Activated naive CD4-positive, alpha-beta T cell treated with anti-CD3 and anti-CD28 coated beads for 36 hours (primary cell): ENCODE measurements at regions of chr4 and their contacts with region 1.

Region 1: GRCh38 chr4:123396307-123397143 is at the start of gene SPRY1:
- DNase-seq: peak; percentile 88
- H3K4me3 Mint-ChIP-seq: peak within 1 kb of the TSS; percentile 87
- H3K27ac Mint-ChIP-seq: peak within 1 kb of the TSS; percentile 83
- H3K4me1 Mint-ChIP-seq: peaks cover 18% of the 10 kb centered on the region
- H3K27me3 Mint-ChIP-seq: peaks cover 15% of the 10 kb centered on the region
- total RNA-seq, gene SPRY1: 16.9 to 20.3 TPM

Region 2: GRCh38 chr4:122764821-122765215 is 631.7 kb before region 1 on chr4:
- CTCF ChIA-PET with region 1: no interaction called
- intact Hi-C with region 1: loop called (anchors 2 kb)
- DNase-seq: no peak
- H3K4me3 Mint-ChIP-seq: no peak overlapping the region
- H3K27ac Mint-ChIP-seq: peak overlapping the region; percentile 50
- H3K4me1 Mint-ChIP-seq: peaks cover 30% of the 10 kb centered on the region
- H3K27me3 Mint-ChIP-seq: no peaks in the 10 kb centered on the region

Region 3: DNA sequence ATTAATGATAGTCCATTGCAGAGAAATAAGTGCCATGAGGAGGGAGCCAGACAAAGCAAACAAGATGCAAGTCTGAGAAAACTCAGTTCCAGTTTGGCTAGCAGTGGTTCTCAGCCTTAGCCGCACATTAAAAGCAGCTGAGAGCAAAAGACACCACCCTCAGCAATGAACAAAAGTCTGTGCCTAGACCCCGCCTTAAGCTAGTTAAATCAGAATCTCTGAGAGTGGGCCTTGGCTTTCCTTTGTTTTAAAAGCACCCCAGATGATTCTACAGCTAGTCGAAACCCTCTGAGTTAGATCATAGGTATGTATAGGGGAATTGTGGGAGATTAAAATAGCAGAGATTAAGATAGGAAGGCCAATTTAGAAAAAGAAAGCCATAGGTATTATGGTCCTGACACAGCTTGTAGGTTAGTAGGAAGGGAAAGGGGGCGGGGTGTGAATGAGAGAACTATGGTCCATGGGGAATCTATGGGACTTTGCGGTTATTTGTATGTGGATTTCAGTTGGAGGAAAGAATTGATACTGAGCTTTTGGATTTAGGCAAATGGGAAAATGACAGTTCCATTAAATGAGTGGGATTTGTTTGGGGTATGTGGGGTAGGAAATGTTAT is 12.1 kb after region 1 on chr4:
- CTCF ChIA-PET with region 1: interaction called, 10 read pairs
- intact Hi-C with region 1: no loop called
- DNase-seq: no peak
- H3K4me3 Mint-ChIP-seq: no peak overlapping the region
- H3K27ac Mint-ChIP-seq: no peak overlapping the region
- H3K4me1 Mint-ChIP-seq: peaks cover 23% of the 10 kb centered on the region
- H3K27me3 Mint-ChIP-seq: peaks cover 2% of the 10 kb centered on the region

Region 4: GRCh38 chr4:123477711-123478209 is 81.2 kb after region 1 on chr4:
- CTCF ChIA-PET with region 1: interaction called, 3 read pairs
- intact Hi-C with region 1: loop called (anchors 1 kb)
- DNase-seq: peak; percentile 83
- H3K4me3 Mint-ChIP-seq: no peak overlapping the region
- H3K27ac Mint-ChIP-seq: no peak overlapping the region
- H3K4me1 Mint-ChIP-seq: peaks cover 25% of the 10 kb centered on the region
- H3K27me3 Mint-ChIP-seq: peaks cover 2% of the 10 kb centered on the region

Region 5: DNA sequence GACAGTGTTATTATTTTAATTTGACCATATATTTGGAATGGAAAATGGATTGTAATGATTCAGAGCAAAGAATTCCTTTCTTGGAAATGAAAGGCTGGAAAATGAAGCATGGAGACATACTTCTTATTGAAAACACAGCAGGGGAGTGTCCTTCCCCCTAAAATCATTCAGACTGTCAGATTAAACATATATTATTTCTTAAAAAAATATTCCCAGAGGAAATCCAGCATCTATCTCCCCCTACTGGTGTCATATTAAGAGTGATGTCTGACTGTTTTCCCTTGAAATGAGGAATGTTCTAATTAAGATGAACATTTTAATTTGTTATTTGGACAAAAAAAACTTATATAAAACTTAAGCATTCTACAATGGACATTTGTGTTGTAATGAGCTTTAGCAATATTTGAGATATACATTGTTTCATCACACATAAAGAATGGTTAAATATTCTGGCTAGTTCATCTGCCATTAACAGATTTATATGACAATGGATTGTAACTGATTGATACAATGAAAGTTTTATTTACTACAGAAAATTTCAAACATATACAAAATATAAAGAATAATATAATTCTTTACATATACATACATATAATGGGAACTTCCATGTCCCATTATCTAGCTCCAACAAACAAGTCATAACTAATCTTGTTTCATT is 264.7 kb after region 1 on chr4:
- CTCF ChIA-PET with region 1: interaction called, 8 read pairs
- intact Hi-C with region 1: loop called (anchors 1 kb)
- DNase-seq: no peak
- H3K4me3 Mint-ChIP-seq: no peak overlapping the region
- H3K27ac Mint-ChIP-seq: no peak overlapping the region
- H3K4me1 Mint-ChIP-seq: peaks cover 11% of the 10 kb centered on the region
- H3K27me3 Mint-ChIP-seq: peaks cover 20% of the 10 kb centered on the region

Region 6: GRCh38 chr4:124262211-124263179 is 866.0 kb after region 1 on chr4:
- CTCF ChIA-PET with region 1: no interaction called
- intact Hi-C with region 1: loop called (anchors 5 kb)
- DNase-seq: peak; percentile 71
- H3K4me3 Mint-ChIP-seq: no peak overlapping the region
- H3K27ac Mint-ChIP-seq: no peak overlapping the region
- H3K4me1 Mint-ChIP-seq: no peaks in the 10 kb centered on the region
- H3K27me3 Mint-ChIP-seq: peaks cover 4% of the 10 kb centered on the region